ENCODE measurements at regions of chrX and their contacts with region 1.

Region 1: GRCh38 chrX:109312757-109313156 is 169.1 kb downstream of the GUCY2F start:
- DNase-seq: no peak
- H3K4me3 ChIP-seq: no peak overlapping the region
- H3K27ac ChIP-seq: no peak overlapping the region
- H3K4me1 ChIP-seq: no peaks in the 10 kb centered on the region
- H3K27me3 ChIP-seq: no peaks in the 10 kb centered on the region
- CTCF ChIP-seq: no peak
- EP300 ChIP-seq: no peak
- POLR2A ChIP-seq: no peak

Region 2: DNA sequence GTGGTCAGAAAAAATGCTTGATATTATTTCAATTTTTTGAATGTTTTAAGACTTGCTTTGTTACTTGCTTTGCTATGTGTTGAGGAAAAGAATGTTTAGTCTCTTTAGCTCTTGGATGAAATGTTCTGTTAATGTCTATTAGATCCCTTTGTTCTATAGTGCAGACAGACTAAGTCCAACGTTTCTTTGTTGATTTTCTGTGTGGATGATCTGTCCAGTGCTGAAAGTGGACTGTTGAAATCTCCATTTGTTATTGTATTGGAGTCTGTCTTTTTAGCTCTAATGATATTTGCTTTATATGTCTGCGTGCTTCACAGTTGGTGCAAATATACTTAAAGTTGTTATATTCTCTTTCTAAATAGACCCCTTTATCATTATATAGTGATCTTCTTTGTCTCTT is 51.5 kb before region 1 on chrX:
- in situ Hi-C with region 1: no loop called
- intact Hi-C with region 1: no loop called
- DNase-seq: no peak
- H3K4me3 ChIP-seq: no peak overlapping the region
- H3K27ac ChIP-seq: no peak overlapping the region
- H3K4me1 ChIP-seq: no peaks in the 10 kb centered on the region
- H3K27me3 ChIP-seq: no peaks in the 10 kb centered on the region
- CTCF ChIP-seq: no peak
- EP300 ChIP-seq: no peak
- POLR2A ChIP-seq: no peak

Region 3: GRCh38 chrX:109327251-109327650 is 14.5 kb after region 1 on chrX:
- in situ Hi-C with region 1: no loop called
- intact Hi-C with region 1: loop called (anchors 1 kb)
- DNase-seq: no peak
- H3K4me3 ChIP-seq: no peak overlapping the region
- H3K27ac ChIP-seq: no peak overlapping the region
- H3K4me1 ChIP-seq: no peaks in the 10 kb centered on the region
- H3K27me3 ChIP-seq: no peaks in the 10 kb centered on the region
- CTCF ChIP-seq: no peak
- EP300 ChIP-seq: no peak
- POLR2A ChIP-seq: no peak